ENCODE measurements at regions of chrX and their contacts with region 1.

Region 1: GRCh38 chrX:153342762-153343558 is 9.0 kb downstream of the ZNF275 start:
- DNase-seq: peak in 4 of 9 donors; percentile 18 to 24 (median 23)
- ATAC-seq: peak; percentile 38
- H3K4me3 ChIP-seq: no peak overlapping the region
- H3K4me3 Mint-ChIP-seq: peak overlapping the region; percentile 5 to 90 (median 74)
- H3K27ac ChIP-seq: peak overlapping the region; percentile 48
- H3K27ac Mint-ChIP-seq: peak overlapping the region; percentile 72 to 97 (median 89)
- H3K4me1 ChIP-seq: peaks cover 0 to 23% of the 10 kb centered on the region in 2 donors
- H3K4me1 Mint-ChIP-seq: peaks cover 36 to 69% (median 62%) of the 10 kb centered on the region in 7 donors
- H3K27me3 ChIP-seq: no peaks in the 10 kb centered on the region
- H3K27me3 Mint-ChIP-seq: no peaks in the 10 kb centered on the region

Region 2: DNA sequence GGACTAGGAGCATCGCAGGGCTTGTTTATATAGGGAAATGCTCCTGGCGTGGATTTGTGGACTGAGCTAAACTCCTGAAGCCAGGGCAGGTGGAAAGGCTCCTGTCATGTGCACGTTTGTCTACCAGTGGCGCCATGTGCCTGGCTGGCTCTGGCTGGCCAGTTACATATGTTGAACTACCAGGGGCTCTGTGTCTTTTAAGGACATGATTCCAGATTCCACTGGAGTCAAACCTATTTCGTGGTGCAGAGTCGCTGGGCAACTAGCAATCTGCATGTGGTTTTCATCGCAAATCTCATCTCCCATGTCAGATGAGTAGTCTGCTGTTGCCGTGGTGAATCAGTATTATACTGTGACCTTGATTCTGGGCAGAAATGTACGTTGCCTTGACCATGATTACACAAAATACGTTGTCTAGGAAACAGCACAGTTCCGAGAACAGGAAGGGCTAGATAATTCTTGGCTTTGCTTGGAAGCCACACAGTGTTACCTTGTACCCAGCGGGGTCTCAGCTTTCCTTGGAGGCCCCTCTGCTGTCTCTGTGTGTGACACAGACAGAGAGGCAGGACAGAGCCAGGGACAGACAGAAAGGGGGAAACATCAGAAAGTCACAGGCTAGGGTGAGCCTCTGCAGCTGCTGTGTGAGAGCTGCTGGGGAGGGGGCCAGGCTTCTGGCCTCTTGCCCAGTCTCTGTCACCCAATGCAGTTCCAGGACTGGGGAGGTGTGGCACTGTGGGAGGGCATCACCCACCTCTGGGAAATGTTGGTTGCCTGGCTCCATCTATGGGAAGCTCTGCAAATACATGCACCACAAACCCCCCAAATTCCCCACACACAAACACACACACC is 38.9 kb after region 1 on chrX:
- CTCF ChIA-PET with region 1: no interaction called
- POLR2A ChIA-PET with region 1: no interaction called
- intact Hi-C with region 1: loop called in 1 of 2 experiments (anchors 5 kb)
- DNase-seq: peak in 5 of 9 donors; percentile 5 to 31 (median 14)
- ATAC-seq: peak; percentile 65
- H3K4me3 ChIP-seq: no peak overlapping the region
- H3K4me3 Mint-ChIP-seq: no peak overlapping the region
- H3K27ac ChIP-seq: no peak overlapping the region
- H3K27ac Mint-ChIP-seq: peak overlapping the region in 1 of 9 donors; percentile 66
- H3K4me1 ChIP-seq: no peaks in the 10 kb centered on the region
- H3K4me1 Mint-ChIP-seq: peaks cover 0 to 4% (median 0%) of the 10 kb centered on the region in 7 donors
- H3K27me3 ChIP-seq: no peaks in the 10 kb centered on the region
- H3K27me3 Mint-ChIP-seq: no peaks in the 10 kb centered on the region